ENCODE measurements at regions of chr12 and their contacts with region 1.

Region 1: DNA sequence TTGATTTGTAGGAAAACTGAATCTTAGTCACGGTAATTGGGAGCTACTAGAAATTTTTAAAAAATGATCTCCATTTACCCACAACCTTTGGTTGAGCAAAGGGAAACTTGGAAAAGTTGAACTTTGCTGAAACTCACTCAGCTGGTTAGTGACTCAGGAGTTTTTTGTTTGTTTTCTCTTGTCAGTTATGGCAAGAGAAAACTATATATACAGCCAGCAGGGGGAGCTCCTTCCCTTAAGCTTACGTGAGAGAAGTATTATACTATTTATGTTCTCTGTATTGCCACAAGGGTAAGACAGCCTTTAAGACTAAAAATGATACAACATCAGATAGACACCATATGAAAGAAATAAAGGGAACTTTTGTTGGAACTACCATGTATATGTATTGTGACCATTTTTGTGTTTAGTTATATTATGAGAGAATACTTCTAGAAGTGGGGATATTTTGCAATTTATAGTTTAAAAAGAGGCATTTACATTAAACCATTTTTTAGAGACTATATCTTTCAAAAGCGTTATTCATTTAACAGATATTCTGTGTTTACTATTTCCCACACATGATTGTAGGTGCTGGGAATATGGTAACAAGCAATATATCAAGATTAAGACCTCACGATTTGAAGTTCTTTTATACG is 28.1 kb upstream of the TBC1D30 start:
- DNase-seq: peak; percentile 38 to 61 (median 54)
- H3K4me3 ChIP-seq: no peak overlapping the region
- H3K4me3 Mint-ChIP-seq: no peak overlapping the region
- H3K27ac ChIP-seq: no peak overlapping the region
- H3K27ac Mint-ChIP-seq: no peak overlapping the region
- H3K4me1 ChIP-seq: no peaks in the 10 kb centered on the region
- H3K4me1 Mint-ChIP-seq: peaks cover 0 to 2% (median 0%) of the 10 kb centered on the region in 3 donors
- H3K27me3 ChIP-seq: no peaks in the 10 kb centered on the region
- H3K27me3 Mint-ChIP-seq: peaks cover 8 to 32% of the 10 kb centered on the region in 2 donors

Region 2: GRCh38 chr12:64780531-64781279 is 15.6 kb before region 1 on chr12:
- CTCF ChIA-PET with region 1: interaction called, 19 read pairs
- POLR2A ChIA-PET with region 1: no interaction called
- DNase-seq: no peak
- H3K4me3 ChIP-seq: peak overlapping the region; percentile 39
- H3K4me3 Mint-ChIP-seq: peak overlapping the region; percentile 71 to 88 (median 81)
- H3K27ac ChIP-seq: no peak overlapping the region
- H3K27ac Mint-ChIP-seq: peak overlapping the region in 1 of 8 donors; percentile 29
- H3K4me1 ChIP-seq: peaks cover 13% of the 10 kb centered on the region
- H3K4me1 Mint-ChIP-seq: peaks cover 15 to 22% (median 20%) of the 10 kb centered on the region in 3 donors
- H3K27me3 ChIP-seq: peaks cover 51% of the 10 kb centered on the region
- H3K27me3 Mint-ChIP-seq: peaks cover 66 to 88% of the 10 kb centered on the region in 2 donors

Region 3: GRCh38 chr12:64785838-64786237 is 10.5 kb before region 1 on chr12:
- CTCF ChIA-PET with region 1: interaction called, 19 read pairs
- POLR2A ChIA-PET with region 1: no interaction called
- DNase-seq: no peak
- H3K4me3 ChIP-seq: no peak overlapping the region
- H3K4me3 Mint-ChIP-seq: no peak overlapping the region
- H3K27ac ChIP-seq: no peak overlapping the region
- H3K27ac Mint-ChIP-seq: no peak overlapping the region
- H3K4me1 ChIP-seq: peaks cover 13% of the 10 kb centered on the region
- H3K4me1 Mint-ChIP-seq: peaks cover 11 to 15% (median 15%) of the 10 kb centered on the region in 3 donors
- H3K27me3 ChIP-seq: peaks cover 39% of the 10 kb centered on the region
- H3K27me3 Mint-ChIP-seq: peaks cover 40 to 46% of the 10 kb centered on the region in 2 donors

Measured in CD8-positive, alpha-beta memory T cell (primary cell).